MCF 10A (cell line): ENCODE measurements at regions of chr11 and their contacts with region 1.

Region 1: GRCh38 chr11:66677599-66678375 is at the start of gene RBM4B:
- DNase-seq: peak; percentile 91
- H3K4me3 Mint-ChIP-seq: peak within 1 kb of the TSS; percentile 89
- H3K27ac Mint-ChIP-seq: peak within 1 kb of the TSS; percentile 98
- H3K4me1 Mint-ChIP-seq: peaks cover 18% of the 10 kb centered on the region
- H3K27me3 Mint-ChIP-seq: no peaks in the 10 kb centered on the region
- CTCF ChIP-seq: no peak
- total RNA-seq, gene RBM4B: 9.5 and 13.5 TPM in 2 replicates

Region 2: DNA sequence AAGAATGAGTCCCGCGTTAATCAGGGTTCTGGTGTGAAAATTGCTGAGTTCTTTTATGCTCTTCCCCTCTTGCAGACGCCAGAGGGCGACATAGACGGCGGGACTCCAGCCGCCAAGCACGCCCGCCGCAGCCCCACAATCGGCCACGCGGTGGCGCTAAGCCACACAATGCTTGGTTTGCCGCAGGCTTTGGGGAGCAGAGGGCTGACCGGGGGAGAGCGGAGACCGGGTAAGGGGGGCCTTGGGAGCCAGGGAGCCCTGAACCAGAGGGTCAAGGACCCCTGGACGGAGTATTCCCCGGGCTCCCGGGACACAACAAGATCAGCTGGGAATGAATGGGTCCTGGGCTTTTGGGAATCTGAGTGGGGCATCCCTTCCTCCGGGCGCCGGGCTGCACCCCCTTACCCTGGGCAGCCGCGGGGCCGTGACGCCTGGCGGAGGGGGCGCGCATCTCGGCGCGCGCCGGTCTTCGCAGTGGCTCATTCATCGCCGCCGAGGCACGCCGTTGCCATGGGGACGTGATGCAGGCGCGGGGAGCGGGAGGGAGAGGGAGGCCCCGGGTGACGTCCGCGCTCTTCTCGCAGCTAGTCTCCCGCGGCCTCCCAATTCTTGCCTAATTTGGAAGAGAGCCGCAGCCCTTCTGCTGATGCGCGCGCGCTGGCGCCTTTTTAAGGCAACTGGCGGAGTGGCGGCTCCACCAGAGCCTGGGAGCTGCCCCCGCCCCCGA is 269.1 kb before region 1 on chr11:
- CTCF ChIA-PET with region 1: interaction called, 51 read pairs
- POLR2A ChIA-PET with region 1: interaction called, 8 read pairs
- intact Hi-C with region 1: loop called (anchors 1 kb)
- DNase-seq: peak; percentile 83
- H3K4me3 Mint-ChIP-seq: peak overlapping the region; percentile 56
- H3K27ac Mint-ChIP-seq: no peak overlapping the region
- H3K4me1 Mint-ChIP-seq: no peaks in the 10 kb centered on the region
- H3K27me3 Mint-ChIP-seq: peaks cover 64% of the 10 kb centered on the region
- CTCF ChIP-seq: peak; percentile 100

Region 3: GRCh38 chr11:66545701-66546367 is 132.0 kb before region 1 on chr11 and contains the start of gene ZDHHC24:
- CTCF ChIA-PET with region 1: no interaction called
- POLR2A ChIA-PET with region 1: interaction called, 11 read pairs
- intact Hi-C with region 1: loop called (anchors 1 kb)
- DNase-seq: peak; percentile 98
- H3K4me3 Mint-ChIP-seq: peak within 1 kb of the TSS; percentile 78
- H3K27ac Mint-ChIP-seq: peak within 1 kb of the TSS; percentile 92
- H3K4me1 Mint-ChIP-seq: peaks cover 41% of the 10 kb centered on the region
- H3K27me3 Mint-ChIP-seq: peaks cover 15% of the 10 kb centered on the region
- CTCF ChIP-seq: no peak
- total RNA-seq, gene ZDHHC24: 11.1 and 12.4 TPM in 2 replicates

Region 4: DNA sequence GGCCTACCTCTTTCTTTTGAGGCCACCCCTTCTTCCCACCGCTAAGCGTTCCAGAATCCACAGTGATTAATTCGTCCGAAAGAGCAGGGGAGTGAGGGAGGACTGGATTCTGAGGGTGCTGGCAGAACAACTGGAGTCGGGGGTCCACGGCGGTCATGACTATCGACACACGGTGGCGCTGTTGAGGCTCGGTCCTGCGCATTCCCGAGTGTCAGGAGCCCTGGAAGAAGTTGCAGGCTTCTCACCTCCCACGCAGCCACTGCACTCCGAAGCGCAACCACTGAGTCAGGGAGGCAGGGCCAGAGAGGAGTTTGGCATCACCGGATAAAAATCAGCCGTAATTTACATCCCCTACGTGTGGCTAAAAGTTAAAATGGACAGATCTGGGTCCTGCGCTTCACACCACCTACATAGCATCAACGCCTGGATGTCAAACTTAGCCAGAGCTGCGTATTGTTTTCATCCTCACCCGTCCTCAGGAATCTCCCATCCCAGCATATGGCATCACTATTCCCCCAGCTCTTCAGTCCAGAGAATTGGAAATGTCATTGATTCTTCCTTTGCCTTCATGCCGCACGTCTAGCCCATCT is 98.7 kb before region 1 on chr11:
- CTCF ChIA-PET with region 1: interaction called, 19 read pairs
- POLR2A ChIA-PET with region 1: interaction called, 19 read pairs
- intact Hi-C with region 1: loop called (anchors 1 kb)
- DNase-seq: peak; percentile 73
- H3K4me3 Mint-ChIP-seq: no peak overlapping the region
- H3K27ac Mint-ChIP-seq: no peak overlapping the region
- H3K4me1 Mint-ChIP-seq: peaks cover 14% of the 10 kb centered on the region
- H3K27me3 Mint-ChIP-seq: peaks cover 28% of the 10 kb centered on the region
- CTCF ChIP-seq: peak; percentile 79

Region 5: DNA sequence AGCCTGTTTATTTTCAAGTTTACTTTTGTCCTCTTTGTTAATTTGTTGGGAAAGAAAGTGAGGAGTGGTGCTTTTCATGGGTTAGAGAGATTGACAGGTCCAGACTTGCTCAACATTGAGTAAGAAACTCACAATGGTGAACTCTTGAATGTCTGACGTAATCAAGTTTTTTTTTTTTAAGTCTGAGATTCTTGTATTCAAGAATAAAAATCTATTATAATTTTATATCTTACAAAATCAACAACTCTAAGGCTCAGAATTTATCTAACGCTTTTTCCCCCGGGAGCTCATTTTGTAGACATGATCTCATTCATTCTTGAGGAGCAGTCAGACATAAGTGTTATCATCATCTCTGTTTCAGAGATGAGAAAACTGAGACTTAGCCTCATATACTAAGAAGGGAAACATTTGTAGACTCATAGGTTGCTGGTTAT is 90.3 kb after region 1 on chr11:
- CTCF ChIA-PET with region 1: no interaction called
- POLR2A ChIA-PET with region 1: interaction called, 13 read pairs
- intact Hi-C with region 1: no loop called
- DNase-seq: peak; percentile 92
- H3K4me3 Mint-ChIP-seq: peak overlapping the region; percentile 53
- H3K27ac Mint-ChIP-seq: peak overlapping the region; percentile 90
- H3K4me1 Mint-ChIP-seq: peaks cover 38% of the 10 kb centered on the region
- H3K27me3 Mint-ChIP-seq: no peaks in the 10 kb centered on the region
- CTCF ChIP-seq: no peak